GM12878 (cell line): ENCODE measurements at regions of chr14 and their contacts with region 1.

Region 1: DNA sequence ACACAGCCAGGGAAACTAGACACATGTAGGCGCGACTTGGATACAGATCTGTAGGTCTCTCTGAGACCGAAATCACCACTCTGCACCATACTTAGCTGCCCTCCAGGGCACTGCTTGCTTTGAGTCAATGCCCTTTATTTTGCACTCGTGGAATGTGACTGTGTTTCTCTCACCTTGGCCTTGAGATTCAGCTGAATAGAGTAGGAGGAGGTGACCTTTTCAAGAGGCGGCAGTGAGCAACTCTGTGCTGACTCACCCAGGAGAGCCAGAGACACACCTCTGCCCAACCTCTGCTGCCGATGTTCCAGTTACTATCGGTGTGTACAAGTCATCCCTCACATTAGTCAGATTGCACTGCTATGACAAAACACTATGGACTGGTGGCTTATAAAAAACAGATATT is 583.4 kb downstream of the VRK1 start:
- DNase-seq: no peak
- ATAC-seq: no peak
- H3K4me3 ChIP-seq: no peak overlapping the region
- H3K27ac ChIP-seq: no peak overlapping the region
- H3K4me1 ChIP-seq: peaks cover 33% of the 10 kb centered on the region
- H3K27me3 ChIP-seq: no peaks in the 10 kb centered on the region
- CTCF ChIP-seq: no peak
- EP300 ChIP-seq: no peak
- POLR2A ChIP-seq: no peak
- RAD21 ChIP-seq: no peak

Region 2: GRCh38 chr14:97185186-97185585 is 195.4 kb before region 1 on chr14:
- CTCF ChIA-PET with region 1: interaction called, 8 read pairs
- POLR2A ChIA-PET with region 1: no interaction called
- RAD21 ChIA-PET with region 1: interaction called, 10 read pairs
- SMC1A ChIA-PET with region 1: interaction called, 5 read pairs
- in situ Hi-C with region 1: no loop called
- intact Hi-C with region 1: no loop called
- DNase-seq: no peak
- ATAC-seq: peak; percentile 45; the same call in 2 of the 3 replicates
- H3K4me3 ChIP-seq: no peak overlapping the region
- H3K27ac ChIP-seq: no peak overlapping the region
- H3K4me1 ChIP-seq: no peaks in the 10 kb centered on the region
- H3K27me3 ChIP-seq: no peaks in the 10 kb centered on the region
- CTCF ChIP-seq: peak; percentile 35 to 48 (median 37); a peak in 4 of 6 replicates
- EP300 ChIP-seq: no peak
- POLR2A ChIP-seq: no peak
- RAD21 ChIP-seq: peak; percentile 73

Region 3: GRCh38 chr14:97306760-97307246 is 73.7 kb before region 1 on chr14:
- CTCF ChIA-PET with region 1: interaction called, 13 read pairs
- POLR2A ChIA-PET with region 1: interaction called, 16 read pairs
- RAD21 ChIA-PET with region 1: interaction called, 214 read pairs
- SMC1A ChIA-PET with region 1: interaction called, 106 read pairs
- in situ Hi-C with region 1: no loop called
- intact Hi-C with region 1: loop called (anchors 2 kb)
- DNase-seq: peak; percentile 67
- ATAC-seq: peak; percentile 68
- H3K4me3 ChIP-seq: no peak overlapping the region
- H3K27ac ChIP-seq: peak overlapping the region; percentile 91
- H3K4me1 ChIP-seq: peaks cover 13% of the 10 kb centered on the region
- H3K27me3 ChIP-seq: no peaks in the 10 kb centered on the region
- CTCF ChIP-seq: no peak
- EP300 ChIP-seq: 0 out of 4 replicates have a peak, but pooled peaks have one; percentile 10 to 29
- POLR2A ChIP-seq: no peak
- RAD21 ChIP-seq: no peak

Region 4: DNA sequence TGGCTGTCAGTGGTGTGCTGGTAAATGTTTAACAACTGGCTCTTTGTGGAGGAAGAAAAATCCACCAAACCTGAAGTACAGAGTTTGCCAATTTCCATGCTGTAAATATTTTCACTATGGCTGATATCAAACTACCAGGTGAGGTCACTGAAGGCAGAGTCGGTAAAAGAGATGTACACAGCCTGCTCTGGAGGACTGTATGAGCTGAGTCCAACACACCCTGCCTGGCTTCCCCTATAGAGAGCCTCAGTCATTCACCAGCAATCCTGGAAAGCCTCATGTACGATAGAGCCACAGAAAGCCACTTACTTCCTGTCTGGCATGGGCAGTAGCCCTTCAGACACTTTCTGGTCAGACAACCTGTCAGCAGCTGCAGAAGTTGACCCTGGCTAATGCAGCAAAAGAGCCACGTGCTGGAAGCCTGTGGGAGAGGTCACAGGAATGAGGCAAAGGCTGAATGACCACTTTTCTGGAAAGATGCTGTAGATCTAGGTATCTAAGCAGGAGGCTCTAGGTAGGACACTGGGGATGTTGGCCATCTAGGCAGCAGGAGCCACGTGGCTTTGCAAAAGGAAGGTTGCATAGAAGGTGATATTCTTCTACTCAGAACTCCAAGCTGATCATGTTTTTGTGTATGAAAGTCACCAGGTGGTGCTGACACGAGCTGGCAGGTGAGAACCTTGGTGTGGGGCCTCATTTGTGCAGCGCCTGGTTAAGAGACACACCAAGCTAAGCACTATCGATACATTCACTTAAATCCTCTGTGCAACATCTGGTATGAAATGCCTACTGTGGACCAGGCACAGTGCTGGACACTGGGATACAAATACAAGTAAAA is 29.4 kb before region 1 on chr14:
- CTCF ChIA-PET with region 1: interaction called, 5 read pairs
- POLR2A ChIA-PET with region 1: interaction called, 5 read pairs
- RAD21 ChIA-PET with region 1: interaction called, 12 read pairs
- SMC1A ChIA-PET with region 1: interaction called, 5 read pairs
- in situ Hi-C with region 1: no loop called
- intact Hi-C with region 1: no loop called
- DNase-seq: no peak
- ATAC-seq: peak; percentile 55
- H3K4me3 ChIP-seq: no peak overlapping the region
- H3K27ac ChIP-seq: no peak overlapping the region
- H3K4me1 ChIP-seq: no peaks in the 10 kb centered on the region
- H3K27me3 ChIP-seq: no peaks in the 10 kb centered on the region
- CTCF ChIP-seq: no peak
- EP300 ChIP-seq: no peak
- POLR2A ChIP-seq: no peak
- RAD21 ChIP-seq: no peak

Region 5: GRCh38 chr14:97366400-97366799 is 14.1 kb before region 1 on chr14:
- CTCF ChIA-PET with region 1: interaction called, 8 read pairs
- POLR2A ChIA-PET with region 1: interaction called, 8 read pairs
- RAD21 ChIA-PET with region 1: interaction called, 10 read pairs
- SMC1A ChIA-PET with region 1: interaction called, 25 read pairs
- in situ Hi-C with region 1: no loop called
- intact Hi-C with region 1: no loop called
- DNase-seq: no peak
- ATAC-seq: no peak
- H3K4me3 ChIP-seq: no peak overlapping the region
- H3K27ac ChIP-seq: no peak overlapping the region
- H3K4me1 ChIP-seq: no peaks in the 10 kb centered on the region; the same call in 1 of the 2 replicates
- H3K27me3 ChIP-seq: no peaks in the 10 kb centered on the region
- CTCF ChIP-seq: no peak
- EP300 ChIP-seq: no peak
- POLR2A ChIP-seq: no peak
- RAD21 ChIP-seq: no peak

Region 6: GRCh38 chr14:97410667-97411620 is 30.4 kb after region 1 on chr14:
- CTCF ChIA-PET with region 1: interaction called, 3 read pairs
- POLR2A ChIA-PET with region 1: interaction called, 5 read pairs
- RAD21 ChIA-PET with region 1: interaction called, 83 read pairs
- SMC1A ChIA-PET with region 1: interaction called, 115 read pairs
- in situ Hi-C with region 1: no loop called
- intact Hi-C with region 1: loop called (anchors 2 kb)
- DNase-seq: no peak
- ATAC-seq: peak; percentile 37; the same call in 2 of the 3 replicates
- H3K4me3 ChIP-seq: no peak overlapping the region
- H3K27ac ChIP-seq: peak overlapping the region; percentile 53
- H3K4me1 ChIP-seq: peaks cover 13% of the 10 kb centered on the region
- H3K27me3 ChIP-seq: no peaks in the 10 kb centered on the region
- CTCF ChIP-seq: peak in 2 of 3 experiments; percentile 2 to 26; a peak in 1 of 6 replicates
- EP300 ChIP-seq: no peak
- POLR2A ChIP-seq: no peak
- RAD21 ChIP-seq: peak; percentile 43; the same call in 1 of the 2 replicates

Region 7: GRCh38 chr14:97477353-97477752 is 96.8 kb after region 1 on chr14:
- CTCF ChIA-PET with region 1: no interaction called
- POLR2A ChIA-PET with region 1: no interaction called
- RAD21 ChIA-PET with region 1: no interaction called
- SMC1A ChIA-PET with region 1: no interaction called
- in situ Hi-C with region 1: no loop called
- intact Hi-C with region 1: no loop called
- DNase-seq: no peak
- ATAC-seq: no peak
- H3K4me3 ChIP-seq: no peak overlapping the region
- H3K27ac ChIP-seq: no peak overlapping the region
- H3K4me1 ChIP-seq: no peaks in the 10 kb centered on the region
- H3K27me3 ChIP-seq: no peaks in the 10 kb centered on the region
- CTCF ChIP-seq: no peak
- EP300 ChIP-seq: no peak
- POLR2A ChIP-seq: no peak
- RAD21 ChIP-seq: no peak

Region 8: DNA sequence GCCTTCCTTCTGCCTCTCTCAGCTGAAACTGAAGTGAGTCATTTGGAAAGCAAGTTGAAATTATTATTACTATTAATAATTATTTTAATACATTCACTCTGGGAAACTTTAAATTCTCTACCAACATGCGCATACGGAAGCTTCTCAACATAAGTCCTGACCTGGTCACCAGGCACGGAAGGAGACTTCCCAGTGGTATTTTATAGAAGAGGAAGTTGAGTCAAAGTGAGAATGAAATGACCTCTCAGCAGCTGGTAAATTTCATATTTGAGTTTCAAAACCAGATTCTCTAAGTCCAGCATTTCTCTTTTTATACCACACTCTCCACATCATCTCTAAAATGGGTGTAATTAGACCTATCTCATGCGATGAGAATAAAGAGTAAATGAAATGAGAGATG is 164.0 kb after region 1 on chr14:
- CTCF ChIA-PET with region 1: no interaction called
- POLR2A ChIA-PET with region 1: no interaction called
- RAD21 ChIA-PET with region 1: interaction called, 3 read pairs
- SMC1A ChIA-PET with region 1: interaction called, 3 read pairs
- in situ Hi-C with region 1: no loop called
- intact Hi-C with region 1: loop called (anchors 10 kb)
- DNase-seq: peak; percentile 21
- ATAC-seq: peak; percentile 68
- H3K4me3 ChIP-seq: no peak overlapping the region
- H3K27ac ChIP-seq: peak overlapping the region; percentile 9; the same call in 1 of the 2 replicates
- H3K4me1 ChIP-seq: peaks cover 6% of the 10 kb centered on the region
- H3K27me3 ChIP-seq: no peaks in the 10 kb centered on the region
- CTCF ChIP-seq: no peak
- EP300 ChIP-seq: peak in 1 of 2 experiments; percentile 47; a peak in 1 of 4 replicates
- POLR2A ChIP-seq: no peak
- RAD21 ChIP-seq: no peak